HCT116 (cell line): ENCODE measurements at regions of chr10 and their contacts with region 1.

Region 1: DNA sequence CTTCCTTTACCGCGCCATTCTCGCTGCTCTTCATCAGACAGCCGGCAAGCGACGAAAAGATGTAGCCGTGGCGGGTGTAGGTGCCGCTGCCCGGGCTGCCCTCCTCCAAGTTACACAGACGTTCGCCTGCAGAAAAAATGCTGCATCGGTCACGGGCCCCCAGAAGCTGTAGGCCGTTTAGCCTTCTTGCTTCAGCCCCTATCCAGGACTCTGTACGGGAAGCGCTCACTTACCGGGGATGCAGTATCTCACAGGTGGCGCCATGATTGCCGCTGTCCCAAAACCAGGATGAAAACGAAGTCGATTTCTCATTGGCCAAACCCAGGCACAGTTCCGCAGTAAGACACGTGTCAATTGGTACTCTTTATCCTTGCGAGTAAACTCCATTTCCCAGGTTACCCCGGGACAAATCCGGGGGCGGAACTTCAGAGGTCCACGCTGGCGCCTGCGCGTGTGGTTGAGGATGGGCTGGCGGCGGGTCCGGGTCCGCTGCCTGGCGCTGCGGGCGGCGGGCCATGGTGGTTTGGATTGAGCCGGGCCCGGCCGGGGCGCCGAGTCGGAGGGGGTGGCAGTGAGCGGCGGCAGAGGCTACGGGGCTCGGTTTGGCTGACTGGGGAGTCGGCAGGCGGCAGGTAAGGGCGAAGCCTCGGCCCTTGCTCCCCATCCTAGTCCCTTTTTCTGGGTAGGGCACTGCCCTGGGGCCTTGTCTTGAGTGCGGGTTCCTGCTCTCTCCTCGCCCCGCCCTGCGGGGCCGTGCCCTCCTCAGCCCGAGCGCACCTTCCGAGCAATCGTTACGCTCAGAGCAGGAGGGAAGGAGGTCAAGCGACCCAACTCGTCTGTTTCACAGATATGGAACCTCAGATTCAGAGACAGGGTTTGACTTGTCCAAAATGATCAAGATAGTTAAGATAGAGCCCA is at the starts of genes EXOSC1 and ZDHHC16:
- DNase-seq: peak; percentile 89
- ATAC-seq: peak; percentile 95
- H3K4me3 ChIP-seq: peak within 1 kb of the TSS; percentile 88 to 90
- H3K27ac ChIP-seq: peak within 1 kb of the TSS; percentile 52
- H3K4me1 ChIP-seq: peaks cover 10 to 21% of the 10 kb centered on the region in 2 experiments
- H3K27me3 ChIP-seq: no peaks in the 10 kb centered on the region
- CTCF ChIP-seq: 0 out of 6 replicates have a peak, but pooled peaks of 1 of the 3 experiments have one; percentile 12
- POLR2A ChIP-seq: peak; percentile 87
- RAD21 ChIP-seq: no peak
- total RNA-seq, gene EXOSC1: 38.9 TPM
- total RNA-seq, gene ZDHHC16: 34.0 TPM

Region 2: GRCh38 chr10:97407211-97407951 is 38.6 kb before region 1 on chr10:
- CTCF ChIA-PET with region 1: no interaction called
- POLR2A ChIA-PET with region 1: no interaction called
- RAD21 ChIA-PET with region 1: no interaction called
- intact Hi-C with region 1: loop called (anchors 1 kb)
- DNase-seq: peak; percentile 77
- ATAC-seq: peak; percentile 96
- H3K4me3 ChIP-seq: peak overlapping the region; percentile 25 to 31
- H3K27ac ChIP-seq: 0 out of 2 replicates have a peak overlapping the region, but pooled peaks have one; percentile 25
- H3K4me1 ChIP-seq: peaks cover 8 to 44% of the 10 kb centered on the region in 2 experiments; a peak in 3 of 4 replicates
- H3K27me3 ChIP-seq: no peaks in the 10 kb centered on the region
- CTCF ChIP-seq: peak; percentile 76 to 97 (median 80)
- POLR2A ChIP-seq: no peak
- RAD21 ChIP-seq: peak; percentile 81

Region 3: GRCh38 chr10:97498076-97498840 is 52.3 kb after region 1 on chr10 and contains the start of gene MMS19:
- CTCF ChIA-PET with region 1: no interaction called
- POLR2A ChIA-PET with region 1: no interaction called
- RAD21 ChIA-PET with region 1: no interaction called
- intact Hi-C with region 1: loop called (anchors 5 kb)
- DNase-seq: peak; percentile 92
- ATAC-seq: peak; percentile 92
- H3K4me3 ChIP-seq: peak within 1 kb of the TSS; percentile 81 to 96
- H3K27ac ChIP-seq: peak within 1 kb of the TSS; percentile 94
- H3K4me1 ChIP-seq: peaks cover 9 to 17% of the 10 kb centered on the region in 2 experiments; a peak in 3 of 4 replicates
- H3K27me3 ChIP-seq: no peaks in the 10 kb centered on the region
- CTCF ChIP-seq: no peak
- POLR2A ChIP-seq: peak; percentile 43
- RAD21 ChIP-seq: no peak
- total RNA-seq, gene MMS19: 101 TPM

Region 4: GRCh38 chr10:97572214-97572989 is 126.4 kb after region 1 on chr10 and contains the start of gene ANKRD2:
- CTCF ChIA-PET with region 1: no interaction called
- POLR2A ChIA-PET with region 1: no interaction called
- RAD21 ChIA-PET with region 1: no interaction called
- intact Hi-C with region 1: no loop called
- DNase-seq: peak; percentile 59
- ATAC-seq: peak; percentile 78
- H3K4me3 ChIP-seq: peak within 1 kb of the TSS in 1 of 2 experiments; percentile 51; a peak in 2 of 4 replicates
- H3K27ac ChIP-seq: peak within 1 kb of the TSS; percentile 68
- H3K4me1 ChIP-seq: peaks cover 53 to 60% of the 10 kb centered on the region in 2 experiments
- H3K27me3 ChIP-seq: no peaks in the 10 kb centered on the region
- CTCF ChIP-seq: peak; percentile 85 to 97 (median 93)
- POLR2A ChIP-seq: no peak
- RAD21 ChIP-seq: peak; percentile 93
- total RNA-seq, gene ANKRD2: 0.15 TPM